ENCODE measurements at regions of chr15 and their contacts with region 1.

Region 1: DNA sequence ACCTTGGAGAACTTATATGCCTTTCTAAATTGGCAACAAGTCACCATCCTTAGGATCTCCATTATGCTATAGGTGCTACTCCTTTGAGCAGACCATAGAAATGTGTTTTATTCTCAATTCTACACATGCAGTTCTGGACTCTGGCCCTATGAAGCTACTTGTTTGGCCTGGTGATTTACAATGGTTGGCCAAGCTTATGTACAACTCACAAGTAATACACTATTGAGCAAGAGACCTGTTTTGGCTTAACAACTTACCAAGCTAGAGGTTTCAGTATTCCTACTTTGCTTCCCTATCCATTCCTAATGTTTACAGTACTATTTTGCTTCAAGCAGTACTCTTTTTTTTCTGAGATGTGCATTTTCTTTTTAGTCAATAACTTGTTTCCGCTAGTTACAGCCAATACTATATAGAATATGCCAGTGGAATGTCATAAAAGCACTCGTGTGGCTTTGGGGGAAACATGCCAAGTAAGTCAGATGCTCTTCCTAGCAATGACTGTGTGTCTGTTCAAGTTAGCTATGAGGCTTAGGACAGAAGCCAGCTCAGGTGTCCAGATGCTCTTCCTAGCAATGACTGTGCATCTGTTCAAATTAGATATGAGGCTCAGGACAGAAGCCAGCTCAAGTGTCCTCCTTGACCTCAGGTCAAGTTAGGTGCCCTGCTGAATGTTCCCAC is 174.9 kb upstream of the SEMA6D start:
- DNase-seq: no peak
- H3K4me3 ChIP-seq: no peak overlapping the region
- H3K27ac ChIP-seq: no peak overlapping the region
- H3K4me1 ChIP-seq: peaks cover 0 to 2% of the 10 kb centered on the region in 2 donors
- H3K27me3 ChIP-seq: no peaks in the 10 kb centered on the region
- CTCF ChIP-seq: no peak

Region 2: DNA sequence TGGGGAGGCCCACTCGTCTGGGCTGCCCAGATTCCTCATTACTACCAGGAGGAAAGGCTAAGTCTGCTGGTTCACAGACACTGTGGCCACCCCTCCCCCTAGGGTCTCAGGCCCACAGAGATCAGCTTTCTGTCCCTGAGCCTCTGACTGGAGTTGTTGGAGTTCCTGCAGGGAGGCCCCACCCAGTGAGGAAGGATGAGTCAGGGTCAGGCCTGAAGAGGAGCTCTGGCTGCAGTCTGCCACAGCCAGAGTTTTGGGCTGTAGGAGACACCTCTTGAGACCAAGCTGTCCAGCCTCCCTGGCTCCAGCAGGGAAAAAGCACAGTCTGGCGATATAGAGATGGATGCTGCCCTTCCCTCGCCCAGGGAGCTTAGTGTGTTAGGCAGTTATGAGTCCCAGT is 546.1 kb before region 1 on chr15:
- intact Hi-C with region 1: no loop called
- DNase-seq: no peak
- H3K4me3 ChIP-seq: no peak overlapping the region
- H3K27ac ChIP-seq: no peak overlapping the region
- H3K4me1 ChIP-seq: no peaks in the 10 kb centered on the region
- H3K27me3 ChIP-seq: no peaks in the 10 kb centered on the region
- CTCF ChIP-seq: no peak

Region 3: GRCh38 chr15:47339803-47340572 is 202.5 kb before region 1 on chr15:
- intact Hi-C with region 1: loop called (anchors 10 kb)
- DNase-seq: no peak
- H3K4me3 ChIP-seq: no peak overlapping the region
- H3K27ac ChIP-seq: no peak overlapping the region
- H3K4me1 ChIP-seq: no peaks in the 10 kb centered on the region
- H3K27me3 ChIP-seq: no peaks in the 10 kb centered on the region
- CTCF ChIP-seq: no peak

Region 4: DNA sequence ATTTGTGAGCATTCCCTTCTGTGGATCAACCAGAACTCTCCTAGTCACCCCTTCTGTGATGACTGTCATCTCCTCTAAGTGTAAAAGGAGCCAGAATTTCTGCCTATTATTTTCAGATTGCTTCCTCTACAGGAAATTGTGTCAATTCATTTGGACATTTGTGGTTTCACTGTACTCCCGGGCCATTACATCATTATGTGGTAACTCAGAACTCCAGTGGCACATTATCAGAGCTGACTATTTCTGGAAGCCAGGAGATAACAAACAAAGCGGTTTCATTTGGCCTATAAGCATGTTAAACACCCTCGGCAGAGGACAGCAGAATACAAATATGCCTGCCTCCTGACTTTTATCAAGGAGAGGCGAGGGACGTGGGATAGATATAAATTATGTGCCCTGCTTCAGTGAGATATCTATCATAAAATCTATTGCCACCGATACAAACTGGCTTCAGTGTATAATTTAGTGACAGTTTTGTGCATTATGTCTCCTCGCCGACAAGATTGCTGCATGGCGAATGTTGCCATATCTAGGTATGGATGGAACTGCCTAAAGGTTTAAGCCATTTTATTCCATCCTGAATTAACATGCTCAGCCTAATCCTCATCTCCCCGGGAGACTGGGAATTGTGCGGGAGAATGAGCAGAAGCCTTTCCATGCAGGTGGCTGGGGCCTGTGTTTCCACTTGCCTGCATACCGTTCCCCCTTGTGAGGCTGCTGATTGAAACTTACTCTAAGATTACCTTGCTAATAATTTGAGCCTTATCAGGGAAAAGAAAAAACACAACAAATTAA is 18.6 kb before region 1 on chr15:
- intact Hi-C with region 1: no loop called
- DNase-seq: no peak
- H3K4me3 ChIP-seq: no peak overlapping the region
- H3K27ac ChIP-seq: no peak overlapping the region
- H3K4me1 ChIP-seq: no peaks in the 10 kb centered on the region
- H3K27me3 ChIP-seq: no peaks in the 10 kb centered on the region
- CTCF ChIP-seq: no peak

Region 5: DNA sequence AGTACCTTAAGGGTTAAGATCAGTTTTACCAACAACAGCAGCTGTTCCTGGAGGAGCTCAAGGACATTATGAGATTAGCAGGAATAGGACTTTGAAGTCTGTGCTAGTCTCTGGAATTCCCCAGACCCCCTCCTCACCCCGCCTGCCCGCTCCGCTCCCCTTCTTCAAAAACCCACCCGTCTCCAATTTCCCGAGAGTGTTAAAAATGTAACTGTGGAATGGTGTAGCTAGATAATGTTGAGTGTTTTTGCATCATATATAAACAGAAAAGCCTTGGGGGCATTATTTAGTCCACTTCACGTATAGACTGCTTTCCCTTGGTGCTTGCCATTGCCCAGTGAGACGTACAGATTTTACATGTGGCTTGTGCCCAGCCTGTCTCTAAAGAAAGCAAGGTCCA is 109.9 kb after region 1 on chr15:
- intact Hi-C with region 1: no loop called
- DNase-seq: no peak
- H3K4me3 ChIP-seq: no peak overlapping the region
- H3K27ac ChIP-seq: no peak overlapping the region
- H3K4me1 ChIP-seq: no peaks in the 10 kb centered on the region
- H3K27me3 ChIP-seq: no peaks in the 10 kb centered on the region
- CTCF ChIP-seq: no peak

Region 6: DNA sequence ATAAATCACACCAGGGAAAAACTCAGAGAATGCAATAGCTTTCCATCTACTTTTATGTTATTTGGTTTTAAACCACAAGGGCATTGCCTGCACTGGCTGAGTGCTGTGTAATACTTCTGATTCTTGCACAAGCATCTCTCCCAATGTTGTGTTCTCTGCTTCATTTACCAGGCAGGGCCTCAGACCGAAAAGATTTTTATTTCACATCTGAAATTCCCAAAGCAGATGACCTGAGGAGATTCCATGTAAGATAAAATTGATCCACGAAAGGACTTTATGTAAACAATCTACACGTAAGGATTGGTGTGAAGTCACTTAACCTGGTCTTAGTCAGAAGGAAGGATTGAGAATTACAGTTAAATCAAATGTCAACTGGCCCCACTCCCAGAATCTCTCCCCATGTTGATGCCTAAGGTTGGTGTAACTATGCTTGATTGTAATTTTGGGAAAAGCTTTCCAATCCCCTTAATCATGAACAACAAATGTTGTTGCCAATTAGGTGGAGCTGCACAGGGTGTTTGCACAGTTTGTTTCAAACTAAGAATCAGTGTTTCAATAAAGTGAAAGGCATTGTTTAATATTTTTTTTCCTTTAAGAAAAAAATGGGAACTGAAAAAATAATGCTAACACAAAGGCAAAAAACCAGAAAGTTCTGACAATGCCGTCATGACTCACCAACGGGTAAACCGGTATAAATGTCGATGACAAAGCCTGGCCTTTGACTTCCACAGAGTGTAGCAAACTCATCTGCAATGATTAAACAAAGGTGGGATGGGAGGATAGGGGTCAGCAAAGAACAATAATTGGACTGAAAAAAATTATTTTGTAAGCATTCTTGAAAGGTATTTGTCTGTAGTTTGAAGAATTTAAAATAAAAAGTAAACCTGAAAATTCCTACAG is 917.4 kb after region 1 on chr15:
- intact Hi-C with region 1: no loop called
- DNase-seq: no peak
- H3K4me3 ChIP-seq: no peak overlapping the region
- H3K27ac ChIP-seq: peak overlapping the region; percentile 60 to 63
- H3K4me1 ChIP-seq: no peaks in the 10 kb centered on the region
- H3K27me3 ChIP-seq: no peaks in the 10 kb centered on the region
- CTCF ChIP-seq: peak in 1 of 3 experiments; percentile 7